ENCODE measurements at regions of chr11 and their contacts with region 1.

Region 1: DNA sequence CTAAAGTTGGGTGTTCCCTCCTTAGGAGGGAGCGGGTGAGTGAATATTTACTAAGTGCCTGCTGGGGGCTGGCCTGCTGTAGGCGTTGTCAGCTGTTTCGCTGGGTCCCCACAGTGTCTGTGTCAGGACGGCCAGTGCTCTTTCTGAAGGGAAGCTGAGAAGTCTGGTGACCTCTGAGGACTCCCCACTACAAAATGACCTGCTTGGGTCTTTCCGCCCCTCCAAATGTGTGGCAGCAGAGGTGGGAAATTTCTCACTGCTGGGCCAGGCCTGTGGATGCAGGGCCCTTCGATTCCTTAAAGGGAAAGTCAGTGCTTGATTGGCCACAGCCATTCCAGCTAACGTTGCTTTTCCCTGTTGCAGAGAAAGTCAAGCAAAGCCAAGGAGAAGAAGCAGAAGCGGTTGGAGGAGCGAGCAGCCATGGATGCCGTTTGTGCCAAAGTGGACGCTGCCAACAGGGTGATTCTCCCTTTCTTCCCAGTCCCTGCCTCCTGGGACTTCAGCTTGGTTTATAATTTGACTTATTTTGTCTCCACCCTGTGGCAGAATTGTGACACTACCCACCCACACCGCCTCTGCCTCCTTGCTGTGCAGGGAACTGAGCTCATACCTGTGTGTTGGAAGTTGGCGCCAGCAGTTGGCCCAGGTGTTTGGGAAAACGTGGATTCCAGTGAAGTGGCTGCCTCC is 6.8 kb downstream of the NAA40 start:
- DNase-seq: peak; percentile 24
- H3K4me3 ChIP-seq: no peak overlapping the region
- CTCF ChIP-seq: peak; percentile 70

Region 2: GRCh38 chr11:63719977-63720376 is 225.6 kb before region 1 on chr11:
- CTCF ChIA-PET with region 1: no interaction called
- POLR2A ChIA-PET with region 1: no interaction called
- DNase-seq: peak; percentile 9
- H3K4me3 ChIP-seq: no peak overlapping the region
- CTCF ChIP-seq: no peak

Region 3: DNA sequence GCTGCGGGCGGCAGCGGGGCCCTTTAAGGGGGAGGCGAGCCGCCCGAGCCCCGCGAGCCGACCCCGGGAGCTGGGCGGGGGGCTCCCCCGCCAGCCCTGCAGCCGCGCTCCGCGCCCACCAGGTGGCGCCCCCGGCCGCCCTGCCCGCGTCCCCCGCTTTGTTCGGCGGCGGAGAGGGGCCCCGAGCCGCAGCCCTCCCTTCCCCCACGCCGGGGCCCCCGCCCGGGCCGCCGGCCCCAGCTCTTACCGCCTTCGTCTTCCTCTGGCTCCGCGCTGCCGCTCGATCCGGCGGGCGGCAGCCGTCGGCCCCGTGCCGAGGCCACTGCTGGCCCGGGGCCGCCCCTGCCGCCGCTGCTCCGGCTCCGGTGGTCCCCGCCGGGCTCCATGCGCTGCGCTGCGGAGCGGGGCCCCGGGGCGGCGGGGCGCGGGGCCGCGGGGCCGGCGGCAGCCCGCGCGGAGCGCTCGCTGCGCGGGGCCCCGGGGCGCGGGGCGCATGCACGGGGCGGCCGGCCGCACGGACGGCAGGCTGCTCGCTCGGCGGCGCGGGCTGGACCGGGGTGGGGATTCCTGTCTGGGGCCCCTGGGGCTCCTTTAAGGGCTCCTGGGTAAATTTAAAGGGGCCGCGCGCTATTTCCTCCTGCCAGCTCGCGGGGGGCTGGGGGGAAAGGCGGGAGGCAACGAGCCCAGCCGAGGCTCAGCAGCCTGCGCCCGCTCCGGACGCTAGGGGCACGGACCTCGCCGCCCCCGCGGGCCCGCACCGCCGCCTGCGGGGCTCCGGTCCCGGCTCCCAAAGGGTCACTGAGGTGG is 177.2 kb before region 1 on chr11 and contains the start of gene ZFTA:
- CTCF ChIA-PET with region 1: interaction called, 33 read pairs
- POLR2A ChIA-PET with region 1: interaction called, 3 read pairs
- DNase-seq: no peak
- H3K4me3 ChIP-seq: peak within 1 kb of the TSS; percentile 70
- CTCF ChIP-seq: peak; percentile 57

Region 4: GRCh38 chr11:63871962-63872799 is 73.4 kb before region 1 on chr11:
- CTCF ChIA-PET with region 1: interaction called, 11 read pairs
- POLR2A ChIA-PET with region 1: no interaction called
- DNase-seq: peak; percentile 81
- H3K4me3 ChIP-seq: no peak overlapping the region
- CTCF ChIP-seq: peak; percentile 46

Region 5: GRCh38 chr11:63916837-63917691 is 28.6 kb before region 1 on chr11 and contains the start of gene RCOR2:
- CTCF ChIA-PET with region 1: interaction called, 15 read pairs
- POLR2A ChIA-PET with region 1: no interaction called
- DNase-seq: no peak
- H3K4me3 ChIP-seq: peak within 1 kb of the TSS; percentile 57
- CTCF ChIP-seq: no peak

Region 6: DNA sequence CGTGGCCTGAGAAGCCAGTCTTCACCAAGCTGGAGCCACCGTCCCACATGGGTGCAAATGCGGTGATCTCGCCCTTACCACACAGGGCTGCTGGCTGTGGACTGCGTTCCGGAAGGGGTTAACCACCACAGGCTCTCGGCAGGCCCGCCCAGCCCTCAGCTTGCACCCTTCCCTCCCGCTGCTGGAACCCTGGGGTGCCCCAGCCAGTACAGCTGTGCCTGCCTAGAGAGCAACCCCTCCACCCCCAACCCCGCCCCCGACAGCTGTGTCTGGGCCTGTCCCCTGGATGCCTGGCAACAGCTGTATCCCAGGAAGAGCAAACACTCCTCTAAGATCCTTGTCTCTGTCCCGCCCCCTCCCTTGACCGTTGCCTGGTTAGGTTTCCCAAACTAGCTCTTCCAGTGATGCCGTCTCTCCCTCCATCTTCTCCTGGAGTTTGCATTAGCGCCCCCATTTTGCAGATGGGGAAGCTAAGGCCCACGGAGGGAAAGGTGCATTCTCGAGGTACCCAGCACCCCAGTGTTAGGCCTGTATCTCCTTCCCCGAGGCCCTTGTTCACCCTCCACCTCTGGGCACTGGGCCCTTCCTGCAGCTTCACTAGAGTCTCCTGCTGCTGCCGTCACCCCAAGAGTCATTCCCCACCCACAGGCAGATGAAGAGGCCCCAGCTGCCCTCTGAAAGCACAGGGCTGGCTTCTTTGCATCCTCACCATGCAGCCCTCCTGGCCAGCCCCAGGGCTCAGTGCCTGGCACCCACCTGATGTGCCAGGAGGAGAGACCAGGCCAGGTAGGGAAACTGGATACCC is 16.2 kb after region 1 on chr11:
- CTCF ChIA-PET with region 1: interaction called, 17 read pairs
- POLR2A ChIA-PET with region 1: no interaction called
- DNase-seq: no peak
- H3K4me3 ChIP-seq: no peak overlapping the region
- CTCF ChIP-seq: no peak